ENCODE measurements at regions of chr17 and their contacts with region 1.

Region 1: GRCh38 chr17:76557368-76558197 is 17.7 kb downstream of the PRCD start:
- DNase-seq: peak; percentile 100
- H3K4me3 ChIP-seq: peak overlapping the region; percentile 77
- H3K27ac ChIP-seq: peak overlapping the region; percentile 59
- H3K4me1 ChIP-seq: peaks cover 54% of the 10 kb centered on the region
- CTCF ChIP-seq: peak; percentile 81

Region 2: GRCh38 chr17:76523084-76524037 is 34.2 kb before region 1 on chr17:
- CTCF ChIA-PET with region 1: interaction called, 7 read pairs
- POLR2A ChIA-PET with region 1: interaction called, 53 read pairs
- intact Hi-C with region 1: loop called (anchors 1 kb)
- DNase-seq: peak; percentile 85
- H3K4me3 ChIP-seq: no peak overlapping the region
- H3K27ac ChIP-seq: no peak overlapping the region
- H3K4me1 ChIP-seq: peaks cover 31% of the 10 kb centered on the region
- CTCF ChIP-seq: peak; percentile 100

Region 3: DNA sequence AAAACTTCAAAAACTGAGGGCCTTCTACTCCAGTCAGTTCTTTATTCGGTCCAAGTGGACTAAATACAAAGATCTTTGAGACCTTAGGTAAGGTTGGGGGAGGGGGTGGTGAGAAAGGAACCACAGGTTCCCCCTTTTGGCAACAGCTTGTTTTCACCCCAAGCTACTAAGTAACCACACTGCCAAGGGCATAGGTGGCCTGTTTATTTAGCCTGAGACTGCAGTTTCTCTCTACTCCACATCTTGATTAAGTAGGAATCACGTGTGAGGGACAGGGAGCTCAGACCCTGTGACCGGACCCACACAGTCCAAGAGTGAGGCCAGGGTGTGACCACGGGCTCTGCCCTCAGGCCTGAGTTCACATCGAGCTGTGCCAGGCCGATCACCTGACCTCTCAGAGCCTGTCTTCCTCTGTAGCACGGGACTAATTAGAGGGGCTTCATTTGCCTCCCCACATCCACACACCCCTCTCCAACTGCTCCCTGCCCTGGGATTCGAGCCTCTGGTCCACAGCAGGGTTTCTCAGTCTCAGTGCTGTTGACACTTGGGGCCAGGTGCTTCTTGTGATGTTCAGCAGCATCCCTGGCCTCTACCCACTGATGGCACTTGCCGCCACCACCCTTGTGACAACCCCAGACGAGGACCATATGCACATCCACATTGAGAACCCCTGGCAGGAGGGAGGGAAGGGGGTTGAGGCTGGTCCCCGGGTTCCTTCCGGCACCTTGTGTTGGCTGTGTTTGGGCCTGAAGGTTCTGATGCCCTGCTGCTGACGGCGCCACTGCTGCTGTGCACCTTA is 10.2 kb after region 1 on chr17:
- CTCF ChIA-PET with region 1: interaction called, 7 read pairs
- POLR2A ChIA-PET with region 1: interaction called, 21 read pairs
- intact Hi-C with region 1: no loop called
- DNase-seq: peak; percentile 54
- H3K4me3 ChIP-seq: no peak overlapping the region
- H3K27ac ChIP-seq: peak overlapping the region; percentile 38
- H3K4me1 ChIP-seq: peaks cover 29% of the 10 kb centered on the region
- CTCF ChIP-seq: 0 out of 2 replicates have a peak, but pooled peaks have one; percentile 13

Region 4: GRCh38 chr17:76623271-76624146 is 65.9 kb after region 1 on chr17:
- CTCF ChIA-PET with region 1: interaction called, 4 read pairs
- POLR2A ChIA-PET with region 1: no interaction called
- intact Hi-C with region 1: loop called (anchors 1 kb)
- DNase-seq: peak; percentile 75
- H3K4me3 ChIP-seq: no peak overlapping the region
- H3K27ac ChIP-seq: no peak overlapping the region
- H3K4me1 ChIP-seq: peaks cover 4% of the 10 kb centered on the region
- CTCF ChIP-seq: peak; percentile 99

Region 5: GRCh38 chr17:76671123-76671911 is 113.7 kb after region 1 on chr17:
- CTCF ChIA-PET with region 1: no interaction called
- POLR2A ChIA-PET with region 1: interaction called, 5 read pairs
- intact Hi-C with region 1: loop called (anchors 5 kb)
- DNase-seq: peak; percentile 100
- H3K4me3 ChIP-seq: peak overlapping the region; percentile 77
- H3K27ac ChIP-seq: peak overlapping the region; percentile 71
- H3K4me1 ChIP-seq: peaks cover 25% of the 10 kb centered on the region
- CTCF ChIP-seq: no peak

Region 6: GRCh38 chr17:76681222-76682137 is 123.9 kb after region 1 on chr17:
- CTCF ChIA-PET with region 1: interaction called, 11 read pairs
- POLR2A ChIA-PET with region 1: no interaction called
- intact Hi-C with region 1: no loop called
- DNase-seq: peak; percentile 83
- H3K4me3 ChIP-seq: no peak overlapping the region
- H3K27ac ChIP-seq: no peak overlapping the region
- H3K4me1 ChIP-seq: no peaks in the 10 kb centered on the region
- CTCF ChIP-seq: peak; percentile 98

Measured in OCI-LY7 (cell line).